ENCODE measurements at regions of chr19 and their contacts with region 1.

Region 1: GRCh38 chr19:2950286-2951124 is 5.7 kb upstream of the ZNF77 start:
- DNase-seq: peak; percentile 99 to 100 (median 100)
- ATAC-seq: peak; percentile 94 to 98 (median 96)
- H3K4me3 ChIP-seq: peak overlapping the region; percentile 68 to 97
- H3K4me3 Mint-ChIP-seq: peak overlapping the region; percentile 94 to 96 (median 95)
- H3K27ac ChIP-seq: peak overlapping the region; percentile 97
- H3K27ac Mint-ChIP-seq: peak overlapping the region; percentile 98 to 99
- H3K4me1 ChIP-seq: peaks cover 12 to 14% of the 10 kb centered on the region in 2 experiments
- H3K4me1 Mint-ChIP-seq: peaks cover 25 to 36% (median 26%) of the 10 kb centered on the region in 3 donors
- H3K27me3 ChIP-seq: peaks cover 0 to 3% of the 10 kb centered on the region in 2 experiments
- H3K27me3 Mint-ChIP-seq: no peaks in the 10 kb centered on the region

Region 2: DNA sequence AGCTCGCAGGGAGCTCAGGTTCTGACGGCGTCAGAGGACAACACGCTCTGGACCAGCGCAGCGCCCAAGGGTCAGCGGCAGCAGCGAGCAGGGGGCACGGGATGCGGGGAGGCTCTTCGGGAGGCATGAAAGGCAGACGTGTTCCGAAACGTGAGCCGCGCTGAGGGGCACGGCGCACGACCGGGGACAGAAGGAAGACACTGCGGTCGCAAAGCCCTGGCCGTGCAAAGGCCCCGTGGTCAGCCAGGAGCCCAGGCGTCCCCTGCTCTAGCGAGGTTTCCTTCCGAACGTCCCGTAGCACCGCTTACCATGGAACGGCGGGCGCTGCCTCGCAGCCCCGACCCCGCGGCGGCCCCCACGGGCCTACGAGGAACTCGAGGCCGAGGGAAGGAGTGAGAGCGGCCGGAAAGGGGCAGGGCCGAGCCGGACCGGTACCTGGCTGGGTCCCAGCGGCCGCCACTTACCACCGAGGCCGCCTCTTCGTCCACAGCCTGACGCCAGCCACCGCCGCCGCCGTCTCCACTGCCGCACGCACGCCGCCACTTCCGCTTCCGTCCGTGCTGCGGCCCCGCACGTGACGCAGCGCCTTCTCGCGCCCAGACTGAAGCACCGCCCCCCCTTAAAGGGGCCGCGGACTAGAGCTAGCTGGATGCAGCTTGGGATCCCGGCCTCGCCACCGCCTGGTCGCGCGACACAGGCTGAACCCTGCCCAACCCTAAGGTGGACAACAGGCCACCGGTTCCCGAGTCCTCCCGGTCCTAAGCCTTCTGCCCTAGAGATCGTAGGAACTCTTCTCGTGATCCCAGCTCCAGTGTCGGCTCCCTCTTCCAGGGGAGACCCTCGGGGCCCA is 1074.6 kb before region 1 on chr19:
- CTCF ChIA-PET with region 1: no interaction called
- POLR2A ChIA-PET with region 1: no interaction called
- DNase-seq: peak; percentile 68 to 95 (median 82)
- ATAC-seq: peak; percentile 87 to 94 (median 94)
- H3K4me3 ChIP-seq: peak overlapping the region; percentile 93 to 97
- H3K4me3 Mint-ChIP-seq: peak overlapping the region; percentile 95 to 99 (median 98)
- H3K27ac ChIP-seq: peak overlapping the region; percentile 80
- H3K27ac Mint-ChIP-seq: peak overlapping the region; percentile 94 to 96
- H3K4me1 ChIP-seq: peaks cover 17 to 57% of the 10 kb centered on the region in 2 experiments
- H3K4me1 Mint-ChIP-seq: peaks cover 32 to 48% (median 35%) of the 10 kb centered on the region in 3 donors
- H3K27me3 ChIP-seq: no peaks in the 10 kb centered on the region
- H3K27me3 Mint-ChIP-seq: no peaks in the 10 kb centered on the region

Region 3: DNA sequence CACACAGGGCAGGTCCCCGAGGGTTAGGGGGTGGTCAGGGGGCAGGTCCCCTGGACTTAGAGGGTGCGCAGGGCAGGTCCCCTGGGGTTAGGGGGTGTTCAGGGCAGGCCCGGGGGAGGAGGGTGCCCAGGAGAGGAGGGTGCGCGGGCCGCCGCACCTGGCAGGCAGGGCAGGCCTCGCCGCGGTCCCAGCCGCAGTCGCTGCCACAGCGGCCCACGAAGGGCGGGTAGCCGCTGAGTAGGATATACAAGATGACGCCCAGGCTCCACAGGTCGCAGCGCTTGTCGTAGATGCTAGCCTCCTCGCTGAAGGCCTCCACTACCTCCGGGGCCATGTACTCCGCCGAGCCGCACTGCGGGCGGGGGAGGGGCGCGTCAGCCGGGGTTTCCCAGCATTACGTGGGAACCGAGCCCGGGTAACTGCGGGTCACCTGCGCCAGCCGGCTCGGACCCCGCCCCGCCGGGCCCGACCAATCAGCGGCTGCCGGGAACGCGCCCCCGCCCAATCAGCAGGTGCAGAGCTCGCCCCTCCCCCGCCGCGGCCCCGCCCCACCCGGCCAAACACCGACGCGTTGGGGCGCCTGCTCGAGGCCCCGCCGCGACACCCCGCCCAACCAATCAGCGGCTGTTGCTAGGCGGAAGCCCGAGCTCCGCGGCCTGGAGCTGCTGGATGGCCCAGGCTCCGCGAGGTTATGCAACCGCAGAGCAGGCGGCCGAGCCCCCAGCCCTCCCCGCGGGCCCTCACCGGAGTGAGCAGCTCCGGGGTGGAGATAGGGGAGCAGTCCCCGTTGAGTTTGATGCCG is 908.6 kb before region 1 on chr19:
- CTCF ChIA-PET with region 1: no interaction called
- POLR2A ChIA-PET with region 1: interaction called in 1 of 2 experiments, 10 read pairs
- DNase-seq: peak; percentile 95 to 100 (median 99)
- ATAC-seq: peak; percentile 82 to 94 (median 90)
- H3K4me3 ChIP-seq: peak overlapping the region; percentile 26 to 50
- H3K4me3 Mint-ChIP-seq: peak overlapping the region; percentile 25 to 65 (median 55)
- H3K27ac ChIP-seq: peak overlapping the region; percentile 96
- H3K27ac Mint-ChIP-seq: peak overlapping the region; percentile 73 to 77
- H3K4me1 ChIP-seq: peaks cover 30 to 65% of the 10 kb centered on the region in 2 experiments
- H3K4me1 Mint-ChIP-seq: peaks cover 6 to 38% (median 28%) of the 10 kb centered on the region in 3 donors
- H3K27me3 ChIP-seq: no peaks in the 10 kb centered on the region
- H3K27me3 Mint-ChIP-seq: no peaks in the 10 kb centered on the region

Region 4: GRCh38 chr19:2834215-2834871 is 116.2 kb before region 1 on chr19:
- CTCF ChIA-PET with region 1: no interaction called
- POLR2A ChIA-PET with region 1: no interaction called
- DNase-seq: no peak
- ATAC-seq: no peak
- H3K4me3 ChIP-seq: peak overlapping the region in 1 of 2 donors; percentile 30
- H3K4me3 Mint-ChIP-seq: no peak overlapping the region
- H3K27ac ChIP-seq: no peak overlapping the region
- H3K27ac Mint-ChIP-seq: no peak overlapping the region
- H3K4me1 ChIP-seq: no peaks in the 10 kb centered on the region
- H3K4me1 Mint-ChIP-seq: peaks cover 0 to 2% (median 0%) of the 10 kb centered on the region in 3 donors
- H3K27me3 ChIP-seq: no peaks in the 10 kb centered on the region
- H3K27me3 Mint-ChIP-seq: no peaks in the 10 kb centered on the region

Region 5: GRCh38 chr19:2922987-2923386 is 27.5 kb before region 1 on chr19:
- CTCF ChIA-PET with region 1: no interaction called
- POLR2A ChIA-PET with region 1: no interaction called
- DNase-seq: no peak
- ATAC-seq: no peak
- H3K4me3 ChIP-seq: no peak overlapping the region
- H3K4me3 Mint-ChIP-seq: no peak overlapping the region
- H3K27ac ChIP-seq: no peak overlapping the region
- H3K27ac Mint-ChIP-seq: no peak overlapping the region
- H3K4me1 ChIP-seq: no peaks in the 10 kb centered on the region
- H3K4me1 Mint-ChIP-seq: no peaks in the 10 kb centered on the region
- H3K27me3 ChIP-seq: no peaks in the 10 kb centered on the region
- H3K27me3 Mint-ChIP-seq: no peaks in the 10 kb centered on the region

Region 6: DNA sequence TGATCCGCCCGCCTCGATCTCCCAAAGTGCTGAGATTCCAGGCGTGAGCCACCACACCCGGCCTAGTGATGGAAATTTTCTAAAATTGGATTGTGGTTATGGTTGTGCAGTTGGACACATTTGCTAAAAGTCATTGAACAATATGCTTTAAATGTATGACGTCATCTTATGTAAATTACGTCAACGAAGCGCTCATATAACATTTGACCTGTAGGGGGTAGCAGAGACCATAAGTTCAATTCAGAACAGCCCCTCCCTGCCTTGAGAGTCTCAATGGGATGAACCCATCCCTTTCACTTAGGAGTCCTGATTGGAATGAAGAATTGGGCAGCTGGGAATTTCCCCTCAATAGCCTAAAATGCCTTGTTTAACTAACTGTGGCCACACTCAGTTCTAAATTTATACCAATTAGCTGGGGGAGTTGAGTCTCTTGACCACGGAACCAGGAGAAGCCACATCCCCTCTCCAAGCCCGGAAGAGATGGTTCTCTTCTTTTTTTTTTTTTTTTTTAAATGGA is 11.6 kb after region 1 on chr19:
- CTCF ChIA-PET with region 1: interaction called in 1 of 2 experiments, 12 read pairs
- POLR2A ChIA-PET with region 1: interaction called in 1 of 2 experiments, 10 read pairs
- DNase-seq: peak in 28 of 35 experiments; percentile 12 to 93 (median 34)
- ATAC-seq: peak in 3 of 4 experiments; percentile 76 to 93 (median 78)
- H3K4me3 ChIP-seq: no peak overlapping the region
- H3K4me3 Mint-ChIP-seq: no peak overlapping the region
- H3K27ac ChIP-seq: no peak overlapping the region
- H3K27ac Mint-ChIP-seq: peak overlapping the region in 1 of 2 donors; percentile 28
- H3K4me1 ChIP-seq: peaks cover 0 to 9% of the 10 kb centered on the region in 2 experiments
- H3K4me1 Mint-ChIP-seq: peaks cover 4 to 7% (median 5%) of the 10 kb centered on the region in 3 donors
- H3K27me3 ChIP-seq: peaks cover 0 to 5% of the 10 kb centered on the region in 2 experiments
- H3K27me3 Mint-ChIP-seq: no peaks in the 10 kb centered on the region

Region 7: DNA sequence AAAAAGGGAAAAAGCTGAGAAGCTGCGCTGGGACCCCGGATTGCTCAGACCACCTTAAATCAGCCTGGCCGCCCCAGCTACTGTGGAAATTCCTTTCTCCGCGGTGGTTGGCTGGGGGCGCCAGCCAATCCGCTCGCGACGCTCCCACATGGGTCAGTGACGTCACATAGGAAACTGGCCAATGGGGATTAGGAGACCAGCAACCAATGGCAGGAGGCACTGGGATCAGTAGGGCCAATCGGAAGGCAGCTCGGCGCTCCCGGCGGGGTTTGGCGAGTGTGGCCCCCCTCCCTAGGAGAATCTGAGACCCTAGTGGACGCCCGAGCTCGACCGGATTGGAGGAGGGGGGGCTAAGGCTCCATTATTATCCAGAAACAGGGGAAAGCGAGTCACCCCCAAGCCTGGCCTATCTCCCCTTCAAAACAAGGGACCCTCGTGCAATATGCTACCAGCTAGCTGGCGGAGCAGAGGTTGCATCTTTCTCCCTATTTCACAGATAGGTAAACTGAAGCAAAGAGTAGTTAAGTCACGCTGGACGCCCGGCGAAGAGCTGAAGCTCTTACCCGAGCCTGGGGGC is 85.1 kb after region 1 on chr19:
- CTCF ChIA-PET with region 1: interaction called in 1 of 2 experiments, 11 read pairs
- POLR2A ChIA-PET with region 1: interaction called in 1 of 2 experiments, 5 read pairs
- DNase-seq: peak; percentile 81 to 98 (median 94)
- ATAC-seq: peak; percentile 88 to 91 (median 90)
- H3K4me3 ChIP-seq: peak overlapping the region; percentile 62 to 92
- H3K4me3 Mint-ChIP-seq: peak overlapping the region; percentile 84 to 91 (median 88)
- H3K27ac ChIP-seq: peak overlapping the region; percentile 81
- H3K27ac Mint-ChIP-seq: peak overlapping the region; percentile 96 to 97
- H3K4me1 ChIP-seq: peaks cover 11 to 28% of the 10 kb centered on the region in 2 experiments
- H3K4me1 Mint-ChIP-seq: peaks cover 26 to 47% (median 33%) of the 10 kb centered on the region in 3 donors
- H3K27me3 ChIP-seq: no peaks in the 10 kb centered on the region
- H3K27me3 Mint-ChIP-seq: no peaks in the 10 kb centered on the region

Region 8: GRCh38 chr19:3108775-3109174 is 158.3 kb after region 1 on chr19:
- CTCF ChIA-PET with region 1: interaction called, 3 to 39 read pairs
- POLR2A ChIA-PET with region 1: no interaction called
- DNase-seq: peak in 34 of 35 experiments; percentile 25 to 84 (median 60)
- ATAC-seq: peak; percentile 56 to 74 (median 63)
- H3K4me3 ChIP-seq: no peak overlapping the region
- H3K4me3 Mint-ChIP-seq: no peak overlapping the region
- H3K27ac ChIP-seq: no peak overlapping the region
- H3K27ac Mint-ChIP-seq: peak overlapping the region in 1 of 2 donors; percentile 74
- H3K4me1 ChIP-seq: peaks cover 0 to 12% of the 10 kb centered on the region in 2 experiments
- H3K4me1 Mint-ChIP-seq: peaks cover 11 to 21% (median 13%) of the 10 kb centered on the region in 3 donors
- H3K27me3 ChIP-seq: peaks cover 0 to 8% of the 10 kb centered on the region in 2 experiments
- H3K27me3 Mint-ChIP-seq: no peaks in the 10 kb centered on the region

Region 9: GRCh38 chr19:3132971-3133792 is 182.7 kb after region 1 on chr19:
- CTCF ChIA-PET with region 1: interaction called in 1 of 2 experiments, 10 read pairs
- POLR2A ChIA-PET with region 1: no interaction called
- DNase-seq: peak in 34 of 35 experiments; percentile 53 to 85 (median 76)
- ATAC-seq: peak; percentile 77 to 95 (median 84)
- H3K4me3 ChIP-seq: peak overlapping the region in 1 of 2 donors; percentile 51
- H3K4me3 Mint-ChIP-seq: peak overlapping the region; percentile 52 to 64 (median 59)
- H3K27ac ChIP-seq: peak overlapping the region; percentile 75
- H3K27ac Mint-ChIP-seq: peak overlapping the region; percentile 90 to 91
- H3K4me1 ChIP-seq: peaks cover 9 to 36% of the 10 kb centered on the region in 2 experiments
- H3K4me1 Mint-ChIP-seq: peaks cover 23 to 40% (median 33%) of the 10 kb centered on the region in 3 donors
- H3K27me3 ChIP-seq: peaks cover 0 to 21% of the 10 kb centered on the region in 2 experiments
- H3K27me3 Mint-ChIP-seq: peaks cover 4 to 7% of the 10 kb centered on the region in 2 donors